AG04449 (cell line): ENCODE measurements at regions of chr19 and their contacts with region 1.

Region 1: DNA sequence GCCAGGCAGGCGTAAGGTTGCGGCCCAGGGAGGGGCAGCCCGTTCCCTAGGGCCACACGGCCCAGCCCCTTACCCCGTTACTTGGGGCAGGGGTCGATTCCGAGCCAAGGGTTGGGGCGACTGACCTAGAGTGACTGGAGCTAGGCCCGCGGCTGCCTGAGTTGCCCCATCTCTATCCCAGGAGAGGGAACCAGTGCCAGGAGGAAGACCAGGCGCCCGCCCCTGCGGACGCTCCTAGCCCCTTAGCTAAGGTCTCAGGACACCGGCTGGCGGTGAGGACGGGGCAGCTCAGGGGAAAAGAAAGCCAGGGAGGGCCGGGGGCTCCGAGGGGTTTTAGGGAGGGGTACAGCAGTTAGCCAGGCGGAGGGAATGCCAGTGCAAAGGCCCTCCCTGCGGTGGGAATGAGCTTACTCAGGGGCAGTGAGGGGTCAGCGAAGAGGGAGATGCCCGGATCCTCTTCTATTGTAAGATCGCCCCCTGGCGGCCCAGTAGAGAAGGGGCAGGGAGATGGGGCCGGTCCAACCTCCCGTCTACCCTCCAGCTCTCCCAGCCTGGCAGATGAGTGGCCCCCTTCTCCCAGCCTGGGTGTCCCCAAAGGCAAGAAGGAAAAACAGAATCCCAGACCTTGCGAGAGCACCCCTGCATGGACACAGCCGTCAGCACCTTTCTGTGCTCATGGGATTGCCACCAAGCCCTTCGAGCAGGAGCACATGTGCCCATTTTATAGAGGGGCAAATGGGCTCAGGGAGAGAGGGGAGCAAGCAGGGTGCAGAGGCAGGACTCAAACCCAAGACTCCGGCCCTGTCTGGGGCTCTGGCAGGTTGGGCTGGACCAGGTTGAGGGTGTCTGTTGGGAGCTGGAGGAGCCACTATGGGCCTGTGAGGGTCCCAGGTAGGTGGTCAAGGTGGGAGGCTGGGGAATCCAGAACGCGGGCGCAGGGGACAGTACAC is 16.3 kb downstream of the CILP2 start:
- DNase-seq: no peak
- H3K4me3 ChIP-seq: no peak overlapping the region
- CTCF ChIP-seq: peak; percentile 73

Region 2: DNA sequence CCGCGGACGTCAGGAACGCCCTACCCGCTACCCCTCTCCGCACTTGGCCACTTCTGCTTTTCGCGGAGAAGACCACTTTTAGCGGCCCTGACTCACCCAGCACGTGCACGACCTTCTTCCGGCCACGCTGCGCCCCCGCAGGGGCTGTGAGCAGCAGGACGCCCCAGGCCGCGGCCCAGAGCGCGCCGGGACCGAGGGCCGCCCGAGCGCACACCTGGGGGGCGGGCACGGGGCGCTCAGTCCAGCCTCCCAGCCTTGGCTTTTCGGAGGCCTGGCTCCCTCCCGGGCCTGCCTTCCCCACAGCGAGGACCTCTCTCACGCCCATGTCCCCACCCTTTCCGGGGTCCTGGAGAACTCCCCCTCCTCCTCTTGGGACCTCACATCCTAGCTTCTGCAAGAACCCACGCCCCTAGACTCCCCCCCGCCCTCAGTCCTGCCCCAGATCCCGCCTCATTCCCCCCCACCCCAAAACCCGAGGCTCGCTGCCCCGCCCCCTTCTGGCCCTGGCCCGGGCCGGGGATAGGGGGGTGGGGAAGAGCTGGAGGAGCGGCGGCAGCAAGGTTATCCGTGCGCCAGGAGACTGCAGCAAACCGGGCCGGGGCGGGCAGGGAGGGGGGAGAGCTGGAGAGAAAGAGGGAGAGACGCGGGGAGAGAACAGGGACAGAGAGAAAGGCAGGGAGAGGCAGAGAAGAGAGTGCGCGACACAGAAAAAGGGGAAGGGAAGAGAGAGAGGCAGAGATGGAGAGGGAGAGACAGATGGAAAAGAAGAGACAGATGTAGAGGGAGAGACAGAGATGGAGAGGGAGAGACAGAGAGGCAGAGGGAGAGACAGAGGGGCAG is 292.8 kb before region 1 on chr19:
- CTCF ChIA-PET with region 1: no interaction called
- POLR2A ChIA-PET with region 1: no interaction called
- DNase-seq: no peak
- H3K4me3 ChIP-seq: no peak overlapping the region
- CTCF ChIP-seq: no peak

Region 3: DNA sequence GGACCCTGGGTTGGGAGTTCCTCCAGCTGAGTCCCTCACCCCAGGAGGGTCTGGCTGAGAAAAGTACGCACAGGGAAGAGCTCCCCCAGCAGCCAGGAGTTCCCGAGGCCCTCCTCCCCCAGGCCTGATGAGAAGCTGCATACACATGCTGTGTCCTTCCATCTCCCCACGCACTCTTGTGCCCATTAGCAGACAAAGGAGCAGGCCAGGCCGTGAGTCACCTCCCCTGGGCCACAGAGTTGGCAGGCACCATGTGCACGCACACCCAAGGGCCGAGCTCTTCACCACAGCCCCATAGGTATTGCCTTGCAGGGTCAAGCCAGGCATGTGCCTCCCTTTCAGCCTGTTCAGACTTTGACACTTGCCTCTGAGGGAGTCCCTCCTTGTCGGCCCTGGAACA is 216.3 kb before region 1 on chr19:
- CTCF ChIA-PET with region 1: no interaction called
- POLR2A ChIA-PET with region 1: no interaction called
- DNase-seq: no peak
- H3K4me3 ChIP-seq: no peak overlapping the region
- CTCF ChIP-seq: no peak

Region 4: DNA sequence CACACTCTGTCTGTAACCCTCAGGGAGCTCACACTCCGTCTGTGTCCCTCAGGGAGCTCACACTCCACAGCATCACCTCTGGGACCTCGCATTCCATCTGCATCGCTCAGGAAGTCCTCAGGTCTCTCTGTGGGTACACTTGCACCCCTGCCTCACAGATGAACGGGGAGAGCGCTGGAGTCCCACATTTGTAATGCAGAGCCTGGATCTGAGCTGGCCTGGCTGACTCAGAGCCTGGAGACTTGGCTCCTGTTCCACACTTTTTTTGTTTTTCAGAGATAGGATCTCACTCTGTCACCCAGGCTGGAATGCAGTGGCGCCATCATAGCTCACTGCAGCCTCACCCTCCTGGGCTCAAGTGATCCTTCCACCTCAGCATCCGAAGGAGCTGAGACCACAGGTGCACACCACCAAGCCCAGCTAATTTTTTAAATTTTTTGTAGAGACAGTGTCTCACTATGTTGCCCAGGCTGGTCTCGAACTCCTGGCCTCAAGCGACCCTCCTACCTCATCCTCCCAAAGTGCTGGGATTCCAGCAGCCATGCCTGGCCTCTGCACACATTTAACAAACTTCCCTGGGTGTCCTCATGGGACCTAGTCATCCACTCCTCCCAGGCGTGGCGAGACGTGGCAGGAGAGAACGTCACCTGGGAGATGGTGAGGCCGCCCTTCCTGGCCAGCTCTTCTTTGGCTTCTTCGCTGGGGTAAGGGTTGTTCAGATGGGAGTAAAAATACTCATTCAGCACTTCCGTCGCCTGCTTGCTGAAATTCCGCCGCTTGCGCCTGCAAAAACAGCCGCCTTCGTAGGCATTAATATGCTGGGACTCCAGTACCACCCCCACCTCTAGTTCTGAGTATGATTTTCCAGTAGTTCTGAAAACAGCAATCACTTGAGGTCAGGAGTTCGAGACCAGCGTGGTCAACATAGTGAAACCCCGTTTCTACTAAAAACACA is 14.7 kb after region 1 on chr19:
- CTCF ChIA-PET with region 1: interaction called, 102 read pairs
- POLR2A ChIA-PET with region 1: no interaction called
- DNase-seq: no peak
- H3K4me3 ChIP-seq: no peak overlapping the region
- CTCF ChIP-seq: no peak

Region 5: GRCh38 chr19:19591133-19591825 is 36.9 kb after region 1 on chr19:
- CTCF ChIA-PET with region 1: interaction called, 23 read pairs
- POLR2A ChIA-PET with region 1: no interaction called
- DNase-seq: peak; percentile 97
- H3K4me3 ChIP-seq: peak overlapping the region; percentile 6; the same call in 1 of the 2 replicates
- CTCF ChIP-seq: no peak

Region 6: GRCh38 chr19:19613456-19613855 is 59.1 kb after region 1 on chr19:
- CTCF ChIA-PET with region 1: interaction called, 13 read pairs
- POLR2A ChIA-PET with region 1: no interaction called
- DNase-seq: no peak
- H3K4me3 ChIP-seq: no peak overlapping the region
- CTCF ChIP-seq: no peak

Region 7: DNA sequence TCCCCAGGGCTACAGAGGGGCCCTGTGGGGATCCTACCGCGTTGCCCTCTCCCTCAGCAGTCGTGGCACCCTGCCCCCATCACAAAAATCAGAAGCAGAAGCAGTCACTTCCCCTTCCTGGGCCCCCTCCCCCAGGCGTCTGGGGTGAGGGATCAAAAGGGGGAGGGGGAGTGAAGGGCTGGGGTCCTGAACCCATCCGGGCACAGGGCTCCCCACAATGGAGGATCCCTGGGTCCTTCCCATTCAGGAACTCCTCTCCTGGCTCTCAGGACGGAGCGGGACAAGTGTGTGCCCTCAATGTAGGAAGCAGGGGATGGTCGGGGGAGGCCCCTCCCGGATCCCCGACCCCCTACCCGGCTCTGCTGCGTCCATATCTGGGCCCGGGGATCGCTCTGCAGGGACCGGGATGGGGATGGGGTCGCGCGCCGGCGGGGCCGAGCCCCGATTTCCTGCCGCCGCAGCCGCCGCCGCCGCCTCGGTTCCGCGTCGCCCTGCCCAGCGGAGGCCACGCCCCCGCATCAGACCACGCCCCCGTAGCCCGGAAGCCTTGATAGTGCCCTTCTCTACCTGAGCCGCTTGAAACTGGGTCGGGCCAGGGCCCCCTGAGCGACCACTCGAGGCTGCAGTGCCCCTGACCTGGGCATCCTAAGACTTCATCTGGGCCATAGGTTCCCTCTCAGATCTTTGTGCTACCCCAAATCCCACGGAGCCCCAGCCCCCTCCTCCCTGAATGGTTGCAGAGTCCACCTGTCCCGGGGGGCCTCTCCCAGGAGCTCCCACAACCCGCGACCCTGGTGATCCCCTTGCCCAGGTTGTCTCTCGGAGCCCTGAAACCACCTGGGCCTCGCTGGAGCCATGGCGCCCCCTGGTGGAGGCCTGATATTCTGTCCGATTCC is 89.1 kb after region 1 on chr19 and contains the start of gene GMIP:
- CTCF ChIA-PET with region 1: interaction called, 25 read pairs
- POLR2A ChIA-PET with region 1: interaction called, 4 read pairs
- DNase-seq: no peak
- H3K4me3 ChIP-seq: peak within 1 kb of the TSS; percentile 88
- CTCF ChIP-seq: peak; percentile 79